Tibial artery (tissue), 4 donors: ENCODE measurements at regions of chr13 and their contacts with region 1.

Region 1: GRCh38 chr13:67155898-67156722 is 74.0 kb downstream of the PCDH9 start:
- DNase-seq: no peak
- H3K4me3 ChIP-seq: no peak overlapping the region
- H3K27ac ChIP-seq: no peak overlapping the region
- H3K4me1 ChIP-seq: no peaks in the 10 kb centered on the region
- H3K27me3 ChIP-seq: no peaks in the 10 kb centered on the region
- CTCF ChIP-seq: no peak

Region 2: DNA sequence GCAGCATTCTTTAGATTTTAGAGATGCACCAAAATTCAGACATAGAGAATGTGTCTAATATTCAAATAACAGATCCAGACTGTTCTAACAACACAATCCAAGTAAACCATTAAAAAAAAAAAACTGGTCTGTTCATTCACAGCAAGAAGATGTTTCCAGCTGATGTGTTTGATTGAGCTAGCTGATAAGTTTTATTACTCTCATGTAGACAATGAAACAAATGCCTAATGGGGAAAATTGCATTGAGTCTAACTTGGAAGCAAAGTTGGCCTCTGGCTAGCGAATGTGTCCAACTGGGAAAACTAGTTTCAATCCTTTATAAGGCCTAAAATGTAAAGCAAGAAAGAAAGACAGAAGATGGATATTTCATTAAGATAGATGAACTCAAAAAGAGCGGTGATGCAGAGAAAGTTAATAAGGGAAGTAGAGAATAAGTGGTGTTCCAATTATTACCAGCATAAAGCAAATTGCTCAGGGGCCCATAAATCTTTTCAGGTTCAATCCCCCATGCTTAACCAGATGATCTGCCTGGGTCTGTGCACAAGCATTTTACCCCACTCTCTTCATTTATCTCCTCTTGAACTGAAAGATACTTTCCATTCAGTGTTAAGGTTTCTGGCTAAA is 19.8 kb after region 1 on chr13:
- intact Hi-C with region 1: loop called (anchors 1 kb)
- DNase-seq: no peak
- H3K4me3 ChIP-seq: no peak overlapping the region
- H3K27ac ChIP-seq: no peak overlapping the region
- H3K4me1 ChIP-seq: no peaks in the 10 kb centered on the region
- H3K27me3 ChIP-seq: no peaks in the 10 kb centered on the region
- CTCF ChIP-seq: no peak